B cell (primary cell): ENCODE measurements at regions of chr7 and their contacts with region 1.

Region 1: DNA sequence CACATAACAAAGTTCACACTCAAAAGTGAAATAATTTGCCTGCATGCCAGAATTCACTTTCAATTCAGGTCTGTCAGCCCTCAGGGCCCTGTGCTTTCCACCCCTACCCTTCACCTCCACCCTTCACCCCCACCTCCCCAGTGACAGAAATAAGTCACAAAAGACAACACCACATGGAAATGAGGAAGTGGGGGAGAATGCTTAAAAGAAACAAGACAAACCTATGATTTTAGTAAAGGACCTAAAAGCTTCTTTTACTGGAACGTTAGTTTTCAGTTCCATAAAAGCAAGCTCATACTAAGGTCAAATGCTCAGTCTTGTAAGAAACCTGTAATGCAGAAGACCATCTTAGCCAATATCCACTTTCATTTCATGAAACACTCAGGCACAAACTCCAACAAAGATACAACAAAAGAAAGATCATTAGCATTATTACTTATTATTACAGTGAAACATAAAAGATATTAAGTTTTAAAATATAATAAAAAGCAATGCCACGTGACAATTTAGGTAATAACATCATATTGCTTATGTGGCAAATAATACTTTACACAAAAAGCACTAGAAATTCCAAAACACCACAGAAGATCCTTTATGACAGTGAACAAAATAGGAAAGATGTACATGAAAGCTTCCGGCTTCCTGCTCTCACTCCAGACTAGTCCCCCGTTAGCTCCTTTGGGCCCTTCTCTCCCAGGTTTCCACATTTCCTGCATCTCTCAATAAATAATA is 112.1 kb downstream of the LMBR1 start:
- DNase-seq: peak; percentile 65
- ATAC-seq: peak; percentile 93
- H3K4me3 ChIP-seq: peak overlapping the region in 1 of 5 experiments; percentile 8
- H3K4me3 Mint-ChIP-seq: peak overlapping the region; percentile 44
- H3K27ac ChIP-seq: peak overlapping the region; percentile 19 to 81
- H3K27ac Mint-ChIP-seq: peak overlapping the region; percentile 87
- H3K4me1 ChIP-seq: peaks cover 15 to 19% of the 10 kb centered on the region in 2 donors
- H3K4me1 Mint-ChIP-seq: peaks cover 30% of the 10 kb centered on the region
- H3K27me3 ChIP-seq: no peaks in the 10 kb centered on the region
- H3K27me3 Mint-ChIP-seq: no peaks in the 10 kb centered on the region
- CTCF ChIP-seq: no peak

Region 2: GRCh38 chr7:156927571-156928405 is 146.9 kb after region 1 on chr7:
- CTCF ChIA-PET with region 1: no interaction called
- POLR2A ChIA-PET with region 1: interaction called, 12 read pairs
- intact Hi-C with region 1: no loop called
- DNase-seq: no peak
- ATAC-seq: no peak
- H3K4me3 ChIP-seq: no peak overlapping the region
- H3K4me3 Mint-ChIP-seq: no peak overlapping the region
- H3K27ac ChIP-seq: no peak overlapping the region
- H3K27ac Mint-ChIP-seq: no peak overlapping the region
- H3K4me1 ChIP-seq: no peaks in the 10 kb centered on the region
- H3K4me1 Mint-ChIP-seq: peaks cover 4% of the 10 kb centered on the region
- H3K27me3 ChIP-seq: peaks cover 0 to 7% (median 0%) of the 10 kb centered on the region in 4 experiments
- H3K27me3 Mint-ChIP-seq: peaks cover 44% of the 10 kb centered on the region
- CTCF ChIP-seq: no peak